Ascending aorta (tissue), 2 donors: ENCODE measurements at regions of chr2 and their contacts with region 1.

Region 1: GRCh38 chr2:160269803-160270570 is 69.9 kb upstream of the ITGB6 start:
- DNase-seq: peak; percentile 60 to 96
- H3K4me3 ChIP-seq: peak overlapping the region; percentile 43 to 68
- H3K27ac ChIP-seq: peak overlapping the region; percentile 96 to 98
- H3K4me1 ChIP-seq: peaks cover 0 to 29% of the 10 kb centered on the region in 2 donors
- H3K27me3 ChIP-seq: no peaks in the 10 kb centered on the region
- CTCF ChIP-seq: peak; percentile 60 to 83 (median 67)

Region 2: DNA sequence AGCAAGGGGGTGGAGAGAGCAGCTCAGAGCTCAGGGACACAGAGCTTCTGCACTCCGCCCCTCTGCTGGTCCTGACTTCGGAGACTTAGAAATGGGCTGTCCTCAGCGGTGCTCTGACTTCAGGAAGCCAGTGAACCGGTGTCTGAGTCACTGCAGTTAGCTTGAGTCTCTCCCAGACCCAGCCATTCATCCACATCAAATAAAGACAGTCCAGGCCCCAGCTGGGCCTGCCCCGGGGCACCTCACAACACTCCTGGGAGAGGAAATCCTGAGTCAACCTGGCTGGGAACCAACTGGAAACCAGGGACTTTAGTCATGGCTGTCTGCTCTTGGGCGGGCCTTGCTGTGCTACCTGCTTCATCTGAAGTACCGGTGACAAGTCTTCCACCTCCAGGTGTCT is 64.5 kb before region 1 on chr2:
- intact Hi-C with region 1: loop called (anchors 2 kb)
- DNase-seq: peak; percentile 59 to 90
- H3K4me3 ChIP-seq: no peak overlapping the region
- H3K27ac ChIP-seq: peak overlapping the region; percentile 72 to 82
- H3K4me1 ChIP-seq: peaks cover 0 to 23% of the 10 kb centered on the region in 2 donors
- H3K27me3 ChIP-seq: no peaks in the 10 kb centered on the region
- CTCF ChIP-seq: no peak

Region 3: GRCh38 chr2:160241251-160242137 is 28.5 kb before region 1 on chr2:
- intact Hi-C with region 1: loop called (anchors 2 kb)
- DNase-seq: peak; percentile 65 to 81
- H3K4me3 ChIP-seq: no peak overlapping the region
- H3K27ac ChIP-seq: peak overlapping the region; percentile 79 to 88
- H3K4me1 ChIP-seq: peaks cover 6 to 23% of the 10 kb centered on the region in 2 donors
- H3K27me3 ChIP-seq: no peaks in the 10 kb centered on the region
- CTCF ChIP-seq: no peak

Region 4: DNA sequence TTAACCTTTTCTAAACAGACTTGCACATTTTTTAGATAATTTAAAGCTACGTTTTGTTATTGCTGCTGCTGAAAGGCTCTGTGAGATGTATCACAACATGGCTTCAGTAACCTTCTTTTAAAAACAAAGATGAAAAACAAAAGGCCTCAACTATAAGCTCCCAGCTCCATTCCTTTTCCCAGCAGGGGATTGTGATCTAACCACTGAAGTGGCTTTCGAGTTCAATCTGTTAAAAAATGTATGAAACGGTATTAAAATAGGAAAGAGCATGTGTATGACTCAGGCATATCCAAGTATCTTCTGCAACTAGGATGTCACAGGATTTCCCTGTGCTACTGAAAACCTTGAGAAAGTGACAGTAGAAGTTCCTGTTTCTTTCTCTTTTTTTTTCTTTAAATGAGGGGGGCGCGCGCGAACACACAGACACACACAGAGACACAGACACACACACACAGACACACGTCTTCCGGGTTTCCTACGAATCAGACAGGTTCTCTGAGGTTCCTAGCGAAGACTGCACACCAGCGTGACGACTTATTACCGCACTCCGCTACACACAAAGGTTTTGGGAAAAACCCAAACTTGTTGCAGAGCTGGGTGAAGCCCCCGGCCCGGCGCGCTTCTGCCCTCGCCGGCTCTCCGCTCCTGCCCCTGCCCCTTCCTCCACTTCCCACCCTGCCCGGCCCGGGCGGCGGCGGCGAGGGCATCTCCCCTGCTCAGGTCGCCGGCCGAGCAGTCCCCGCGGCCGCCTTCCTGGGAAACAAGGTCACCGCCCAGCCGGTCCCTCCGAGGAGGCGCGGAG is 136.8 kb after region 1 on chr2:
- intact Hi-C with region 1: loop called (anchors 5 kb)
- DNase-seq: peak in 1 of 2 donors; percentile 80
- H3K4me3 ChIP-seq: peak overlapping the region; percentile 92 to 99
- H3K27ac ChIP-seq: peak overlapping the region; percentile 97
- H3K4me1 ChIP-seq: peaks cover 10 to 44% of the 10 kb centered on the region in 2 donors
- H3K27me3 ChIP-seq: no peaks in the 10 kb centered on the region
- CTCF ChIP-seq: peak in 1 of 3 experiments; percentile 3